ENCODE measurements at regions of chr9 and their contacts with region 1.

Region 1: DNA sequence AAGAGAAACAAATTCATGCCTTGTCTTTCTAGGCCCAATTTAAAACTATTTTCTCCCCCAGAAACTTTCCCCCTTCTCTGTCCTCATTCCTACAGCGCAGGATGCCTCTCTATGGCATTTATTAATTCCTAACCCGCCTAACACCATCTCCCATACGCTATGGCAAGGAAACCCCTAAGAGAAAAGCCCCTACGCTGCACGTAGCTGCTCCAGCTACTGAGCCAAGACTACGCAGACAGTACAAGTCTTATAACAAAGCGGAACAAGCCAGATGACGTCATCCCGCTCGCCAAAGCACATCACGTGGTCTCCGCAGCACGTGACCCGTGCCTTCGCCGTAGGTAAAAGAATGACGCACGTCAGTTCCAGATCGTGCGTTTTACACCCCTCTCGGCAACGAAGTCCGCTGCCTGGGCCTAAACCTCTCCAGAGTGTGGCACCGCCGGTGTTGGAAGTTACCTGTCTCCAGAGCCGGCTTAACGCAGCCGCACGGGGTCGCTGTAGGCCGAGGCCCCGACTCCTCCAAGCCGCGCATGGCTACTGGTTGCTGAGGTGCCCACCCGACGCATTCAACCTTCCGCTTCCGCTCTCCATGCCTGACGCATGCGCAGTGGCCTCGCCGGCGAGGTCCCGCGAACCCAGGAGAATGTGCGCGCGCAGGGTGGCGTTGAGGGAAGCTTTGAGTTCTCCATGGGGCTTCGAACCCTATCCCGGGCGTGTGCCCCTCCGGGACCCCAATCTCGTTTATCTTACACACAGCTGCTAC is at the start of gene TRMO:
- DNase-seq: peak; percentile 97
- H3K4me3 ChIP-seq: peak within 1 kb of the TSS; percentile 47 to 63
- H3K27ac ChIP-seq: peak within 1 kb of the TSS; percentile 96 to 98
- H3K4me1 ChIP-seq: no peaks in the 10 kb centered on the region
- H3K27me3 ChIP-seq: no peaks in the 10 kb centered on the region
- CTCF ChIP-seq: peak; percentile 44 to 96 (median 84)
- POLR2A ChIP-seq: peak; percentile 78
- total RNA-seq, gene TRMO: 44.8 to 45.2 TPM

Region 2: DNA sequence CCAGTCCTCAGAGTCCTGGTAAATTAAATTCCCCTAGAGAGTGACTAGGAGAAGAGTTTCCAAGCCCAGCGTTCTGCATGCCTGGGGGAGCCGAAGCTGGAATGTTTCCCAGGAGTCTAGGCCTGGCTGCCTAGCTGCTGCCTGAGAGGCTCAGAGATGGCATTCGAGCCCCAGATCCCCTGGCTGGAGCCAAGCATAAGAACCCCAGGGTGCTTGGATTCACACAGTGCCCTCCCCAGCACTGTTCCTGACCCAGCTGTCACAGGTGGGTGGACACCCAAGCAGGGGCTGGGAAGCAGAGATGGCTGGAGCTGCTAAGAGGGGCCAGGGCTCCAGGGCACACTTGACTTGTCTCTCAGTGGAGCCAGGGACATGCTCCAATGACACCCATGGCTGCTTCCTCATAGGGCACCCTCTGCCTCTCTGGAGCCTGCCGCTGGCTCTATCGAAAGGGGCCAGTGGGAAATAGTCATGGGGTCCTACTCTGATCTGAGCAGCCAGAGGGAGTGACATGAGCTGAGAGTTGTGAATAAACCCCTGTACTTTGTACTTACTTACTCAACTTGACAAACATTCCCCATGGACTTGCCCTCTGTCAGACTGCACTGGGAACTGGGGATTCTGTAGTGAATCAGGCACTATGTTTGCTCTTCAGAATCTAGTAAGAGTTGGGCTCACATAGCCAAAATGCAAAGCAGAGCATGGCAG is 162.4 kb before region 1 on chr9:
- intact Hi-C with region 1: no loop called
- DNase-seq: no peak
- H3K4me3 ChIP-seq: no peak overlapping the region
- H3K27ac ChIP-seq: no peak overlapping the region
- H3K4me1 ChIP-seq: no peaks in the 10 kb centered on the region
- H3K27me3 ChIP-seq: peaks cover 5% of the 10 kb centered on the region
- CTCF ChIP-seq: no peak
- POLR2A ChIP-seq: no peak

Region 3: DNA sequence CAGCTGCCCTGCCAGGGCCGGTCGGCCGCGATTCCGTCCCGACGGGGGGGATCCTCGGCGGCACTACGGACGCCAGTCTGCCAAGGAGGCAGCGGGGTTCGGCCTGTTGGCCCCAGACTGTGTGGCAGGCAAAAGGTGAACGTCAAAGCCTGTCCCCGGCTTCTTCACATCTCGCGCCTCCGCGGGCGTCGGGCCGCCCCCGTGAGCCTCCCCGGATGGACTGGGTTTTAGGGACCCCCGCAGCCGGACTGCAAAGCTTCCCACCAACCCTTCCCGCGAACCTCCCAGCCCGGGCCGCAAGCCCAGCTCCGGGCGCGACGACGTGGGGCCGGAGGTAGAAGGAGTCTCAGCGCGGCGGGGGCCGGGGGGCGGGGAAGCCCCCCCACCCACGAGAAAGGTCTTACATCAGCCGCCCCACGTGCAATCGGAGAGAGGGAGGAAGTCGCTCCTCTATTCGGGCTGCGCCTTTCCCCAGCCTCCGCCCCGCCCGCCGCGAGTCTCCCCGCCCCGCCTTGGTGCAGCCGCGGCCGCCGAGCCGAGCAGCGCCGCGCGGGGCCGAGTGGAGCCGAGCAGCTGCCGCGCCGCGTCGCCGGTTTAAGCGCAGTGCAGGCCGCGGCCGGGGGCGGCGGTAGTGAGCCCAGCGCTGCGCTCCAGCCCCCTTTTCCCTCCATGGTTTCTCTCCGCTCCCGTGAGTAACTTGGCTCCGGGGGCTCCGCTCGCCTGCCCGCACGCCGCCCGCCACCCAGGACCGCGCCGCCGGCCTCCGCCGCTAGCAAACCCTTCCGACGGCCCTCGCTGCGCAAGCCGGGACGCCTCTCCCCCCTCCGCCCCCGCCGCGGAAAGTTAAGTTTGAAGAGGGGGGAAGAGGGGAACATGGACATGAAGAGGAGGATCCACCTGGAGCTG is 60.8 kb after region 1 on chr9 and contains the start of gene ANP32B:
- intact Hi-C with region 1: loop called (anchors 2 kb)
- DNase-seq: peak; percentile 85
- H3K4me3 ChIP-seq: peak within 1 kb of the TSS; percentile 95 to 97
- H3K27ac ChIP-seq: peak within 1 kb of the TSS; percentile 97 to 99
- H3K4me1 ChIP-seq: peaks cover 9% of the 10 kb centered on the region
- H3K27me3 ChIP-seq: no peaks in the 10 kb centered on the region
- CTCF ChIP-seq: peak; percentile 85 to 97 (median 90)
- POLR2A ChIP-seq: peak; percentile 35
- total RNA-seq, gene ANP32B: 22.5 to 25.1 TPM

Region 4: GRCh38 chr9:98034593-98035546 is 112.7 kb after region 1 on chr9:
- intact Hi-C with region 1: loop called (anchors 2 kb)
- DNase-seq: peak; percentile 80
- H3K4me3 ChIP-seq: no peak overlapping the region
- H3K27ac ChIP-seq: no peak overlapping the region
- H3K4me1 ChIP-seq: no peaks in the 10 kb centered on the region
- H3K27me3 ChIP-seq: no peaks in the 10 kb centered on the region
- CTCF ChIP-seq: peak; percentile 67 to 84 (median 77)
- POLR2A ChIP-seq: no peak

Region 5: DNA sequence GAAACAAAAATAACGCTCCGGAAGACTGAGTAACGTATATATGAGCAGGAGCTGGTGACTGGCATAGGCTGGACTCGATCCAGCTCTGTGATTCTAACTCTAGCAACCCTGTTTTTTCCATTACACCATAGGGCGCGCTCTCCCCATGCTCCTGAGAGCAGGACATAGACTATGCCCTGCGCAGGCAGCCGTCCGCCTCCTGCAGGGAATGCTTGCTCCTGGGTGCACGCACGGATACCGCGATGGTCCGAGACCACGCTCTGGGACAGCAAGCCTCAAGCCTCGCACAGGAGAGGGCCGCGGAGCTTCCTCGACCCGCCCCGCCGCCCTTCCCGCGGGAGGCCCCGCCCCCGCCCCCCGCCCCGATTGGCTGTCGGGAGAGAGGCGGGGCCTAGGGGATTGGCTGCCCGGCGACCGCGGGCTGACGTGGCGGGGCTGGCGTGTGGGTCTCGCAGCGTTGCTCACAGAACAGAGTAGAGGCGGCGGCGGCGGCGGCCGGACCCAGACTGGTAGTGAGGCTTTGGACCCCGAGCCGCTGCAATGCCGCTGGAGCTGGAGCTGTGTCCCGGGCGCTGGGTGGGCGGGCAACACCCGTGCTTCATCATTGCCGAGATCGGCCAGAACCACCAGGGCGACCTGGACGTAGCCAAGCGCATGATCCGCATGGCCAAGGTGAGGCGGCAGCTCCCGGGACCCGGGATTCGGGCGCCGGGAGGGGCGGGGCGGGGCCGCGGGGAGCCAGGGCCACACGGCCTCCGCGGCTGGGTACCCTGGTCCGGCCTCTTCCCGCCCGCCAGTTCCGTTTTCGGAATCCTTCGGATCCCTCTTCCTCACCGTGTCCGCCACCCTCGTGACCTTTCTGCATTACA is 134.4 kb after region 1 on chr9 and contains the start of gene NANS:
- intact Hi-C with region 1: loop called (anchors 5 kb)
- DNase-seq: peak; percentile 95
- H3K4me3 ChIP-seq: peak within 1 kb of the TSS; percentile 88 to 94
- H3K27ac ChIP-seq: peak within 1 kb of the TSS; percentile 97
- H3K4me1 ChIP-seq: no peaks in the 10 kb centered on the region
- H3K27me3 ChIP-seq: no peaks in the 10 kb centered on the region
- CTCF ChIP-seq: peak in 1 of 4 experiments; percentile 3
- POLR2A ChIP-seq: peak; percentile 99
- total RNA-seq, gene NANS: 160 to 318 TPM

Region 6: GRCh38 chr9:98255578-98256296 is 333.6 kb after region 1 on chr9 and contains the start of gene TBC1D2:
- intact Hi-C with region 1: loop called (anchors 2 kb)
- DNase-seq: peak; percentile 98
- H3K4me3 ChIP-seq: peak within 1 kb of the TSS; percentile 70 to 72
- H3K27ac ChIP-seq: peak within 1 kb of the TSS; percentile 95 to 96
- H3K4me1 ChIP-seq: no peaks in the 10 kb centered on the region
- H3K27me3 ChIP-seq: no peaks in the 10 kb centered on the region
- CTCF ChIP-seq: peak in 2 of 4 experiments; percentile 22 to 33
- POLR2A ChIP-seq: peak; percentile 88
- total RNA-seq, gene TBC1D2: 18.4 to 18.8 TPM